ENCODE measurements at regions of chr16 and their contacts with region 1.

Region 1: GRCh38 chr16:11972128-11972527 is 4.4 kb upstream of the SNX29 start:
- DNase-seq: no peak
- ATAC-seq: no peak
- H3K4me3 ChIP-seq: no peak overlapping the region
- H3K27ac ChIP-seq: no peak overlapping the region
- H3K4me1 ChIP-seq: no peaks in the 10 kb centered on the region
- H3K27me3 ChIP-seq: no peaks in the 10 kb centered on the region
- CTCF ChIP-seq: no peak; the same call in 1 of the 2 replicates

Region 2: GRCh38 chr16:11986521-11987057 is 14.5 kb after region 1 on chr16:
- CTCF ChIA-PET with region 1: no interaction called
- POLR2A ChIA-PET with region 1: no interaction called
- in situ Hi-C with region 1: no loop called
- intact Hi-C with region 1: no loop called
- DNase-seq: no peak
- ATAC-seq: no peak
- H3K4me3 ChIP-seq: no peak overlapping the region
- H3K27ac ChIP-seq: no peak overlapping the region
- H3K4me1 ChIP-seq: no peaks in the 10 kb centered on the region
- H3K27me3 ChIP-seq: no peaks in the 10 kb centered on the region
- CTCF ChIP-seq: no peak

Region 3: GRCh38 chr16:12143447-12144172 is 171.5 kb after region 1 on chr16:
- CTCF ChIA-PET with region 1: no interaction called
- POLR2A ChIA-PET with region 1: interaction called, 11 read pairs
- in situ Hi-C with region 1: no loop called
- intact Hi-C with region 1: no loop called
- DNase-seq: no peak
- ATAC-seq: no peak
- H3K4me3 ChIP-seq: no peak overlapping the region
- H3K27ac ChIP-seq: no peak overlapping the region
- H3K4me1 ChIP-seq: no peaks in the 10 kb centered on the region
- H3K27me3 ChIP-seq: no peaks in the 10 kb centered on the region
- CTCF ChIP-seq: no peak

Measured in Panc1 (cell line).